ENCODE measurements at regions of chr9 and their contacts with region 1.

Region 1: DNA sequence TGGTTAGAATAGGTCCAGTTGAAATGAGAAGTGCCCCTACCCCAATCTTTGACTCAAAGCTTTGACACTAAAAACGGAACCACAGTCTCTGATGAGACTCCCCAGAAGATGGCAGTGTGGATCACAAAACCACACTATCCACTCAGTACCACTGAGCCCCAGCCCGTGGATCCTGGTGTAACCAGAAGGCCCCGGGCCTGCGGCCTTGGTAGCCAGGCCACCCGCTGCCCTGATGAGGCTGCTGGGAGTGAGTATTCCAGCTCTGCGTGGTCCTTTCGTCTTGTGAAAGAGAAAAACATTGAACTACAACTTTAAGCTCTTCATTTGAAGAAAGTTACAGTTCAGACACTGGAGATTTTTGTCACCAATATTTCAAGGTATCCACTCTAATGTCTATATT is 42.2 kb upstream of the FBP1 start:
- DNase-seq: peak; percentile 87
- H3K4me3 ChIP-seq: no peak overlapping the region; a peak in 1 of 4 replicates
- H3K27ac ChIP-seq: peak overlapping the region in 1 of 2 experiments; percentile 83; a peak in 2 of 4 replicates
- H3K4me1 ChIP-seq: peaks cover 0 to 35% of the 10 kb centered on the region in 2 experiments; a peak in 1 of 4 replicates
- H3K27me3 ChIP-seq: no peaks in the 10 kb centered on the region
- CTCF ChIP-seq: peak; percentile 81
- EP300 ChIP-seq: no peak
- RAD21 ChIP-seq: peak; percentile 94

Region 2: DNA sequence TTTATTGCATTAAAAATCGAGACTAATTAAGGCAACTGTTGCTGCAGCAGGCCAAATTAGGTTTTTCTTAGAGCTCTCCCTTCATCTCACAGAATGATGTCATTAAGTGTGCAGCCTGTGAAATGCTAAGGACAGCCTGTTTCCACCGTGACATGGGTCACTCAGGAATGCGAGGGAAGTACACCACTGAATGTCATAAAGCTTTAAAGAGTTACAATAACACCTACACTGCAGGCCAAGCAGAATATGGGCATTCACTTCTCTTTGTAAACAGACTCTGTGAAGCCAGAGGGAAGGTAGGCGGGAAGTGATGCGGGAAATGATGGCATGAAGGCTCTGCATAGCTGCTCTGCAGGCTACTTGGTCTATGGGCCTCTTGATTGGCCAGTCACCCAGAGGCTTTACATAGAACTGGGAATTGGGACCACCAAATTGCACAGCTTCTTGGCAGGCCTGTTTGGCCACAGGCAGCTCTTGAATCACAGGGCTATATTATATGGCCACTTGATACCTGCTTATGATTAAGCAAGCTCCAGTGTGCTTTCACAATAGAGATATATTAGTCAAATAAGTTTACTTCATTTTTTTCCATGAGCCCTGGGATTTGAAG is 16.6 kb after region 1 on chr9:
- CTCF ChIA-PET with region 1: interaction called, 41 read pairs
- POLR2A ChIA-PET with region 1: no interaction called
- DNase-seq: no peak
- H3K4me3 ChIP-seq: no peak overlapping the region
- H3K27ac ChIP-seq: peak overlapping the region in 1 of 2 experiments; percentile 48; a peak in 1 of 4 replicates
- H3K4me1 ChIP-seq: peaks cover 0 to 20% of the 10 kb centered on the region in 2 experiments; a peak in 1 of 4 replicates
- H3K27me3 ChIP-seq: no peaks in the 10 kb centered on the region
- CTCF ChIP-seq: no peak
- EP300 ChIP-seq: no peak
- RAD21 ChIP-seq: no peak

Region 3: DNA sequence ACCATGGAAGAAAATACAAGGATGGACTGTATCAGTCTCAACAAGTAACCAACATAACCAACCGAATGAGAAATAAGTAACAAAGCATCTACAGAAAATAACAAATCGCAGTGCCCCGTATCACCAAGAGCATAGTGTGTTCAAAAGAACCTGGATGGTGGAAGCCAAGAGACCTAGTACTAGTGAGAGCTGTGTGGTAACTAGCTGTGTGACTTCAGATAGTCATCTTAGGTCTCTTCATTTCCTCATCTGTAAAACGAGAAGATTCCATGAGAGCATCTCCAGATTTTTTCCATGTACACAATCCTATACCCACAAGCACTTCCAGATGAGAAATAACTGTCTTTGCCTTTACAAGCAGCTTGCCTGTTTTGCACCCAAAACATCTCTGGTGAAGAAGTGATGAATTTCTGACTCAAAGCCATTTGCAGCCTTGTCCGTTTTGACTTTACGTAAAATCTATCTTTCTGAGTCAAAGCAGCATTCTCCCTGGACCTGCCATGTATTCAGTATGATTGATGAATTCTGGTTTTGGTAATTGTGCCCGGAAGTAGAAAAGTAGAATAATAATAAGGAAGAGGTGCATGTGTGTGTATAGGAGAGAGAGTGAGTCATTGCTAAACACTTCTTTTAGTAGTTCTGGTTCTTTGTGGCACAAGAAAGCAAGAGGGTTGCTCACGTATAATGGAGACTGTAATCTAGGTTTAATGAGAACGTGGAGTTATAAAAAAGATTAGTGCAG is 86.0 kb after region 1 on chr9:
- CTCF ChIA-PET with region 1: interaction called, 12 read pairs
- POLR2A ChIA-PET with region 1: no interaction called
- DNase-seq: no peak
- H3K4me3 ChIP-seq: no peak overlapping the region
- H3K27ac ChIP-seq: peak overlapping the region; percentile 48 to 75
- H3K4me1 ChIP-seq: peaks cover 0 to 4% of the 10 kb centered on the region in 2 experiments; a peak in 2 of 4 replicates
- H3K27me3 ChIP-seq: no peaks in the 10 kb centered on the region
- CTCF ChIP-seq: no peak
- EP300 ChIP-seq: peak in 1 of 2 experiments; percentile 49; a peak in 1 of 4 replicates
- RAD21 ChIP-seq: no peak

Region 4: DNA sequence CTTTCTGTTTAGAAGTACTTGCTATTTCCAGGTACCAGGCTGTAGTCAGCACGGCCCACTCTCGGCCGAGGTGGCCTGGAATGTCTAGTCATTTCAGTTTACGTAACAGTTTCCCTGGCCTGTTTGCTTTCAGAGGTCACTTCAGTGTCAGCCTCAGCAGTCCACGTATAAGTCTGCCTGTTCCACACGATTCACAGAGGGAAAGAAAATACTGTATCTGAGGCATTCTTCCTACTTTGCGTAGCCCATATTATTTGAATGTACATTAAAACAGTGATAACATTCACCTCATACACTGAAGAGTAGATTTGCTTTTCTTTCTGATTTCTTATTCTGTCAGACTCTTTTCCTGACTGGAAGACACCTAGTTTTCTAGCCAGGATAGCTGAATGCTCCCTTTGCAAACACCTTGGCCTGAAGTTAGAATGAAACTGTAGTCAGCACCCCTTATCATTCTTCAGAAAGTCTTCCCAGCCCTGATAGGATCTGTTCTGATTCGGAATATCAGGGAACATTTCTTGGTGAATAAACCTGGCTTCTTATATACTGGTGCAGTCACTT is 185.9 kb after region 1 on chr9:
- CTCF ChIA-PET with region 1: interaction called, 22 read pairs
- POLR2A ChIA-PET with region 1: no interaction called
- DNase-seq: peak; percentile 17
- H3K4me3 ChIP-seq: peak overlapping the region in 1 of 2 experiments; percentile 7; a peak in 1 of 4 replicates
- H3K27ac ChIP-seq: peak overlapping the region; percentile 97 to 100
- H3K4me1 ChIP-seq: peaks cover 63 to 75% of the 10 kb centered on the region in 2 experiments
- H3K27me3 ChIP-seq: no peaks in the 10 kb centered on the region
- CTCF ChIP-seq: no peak
- EP300 ChIP-seq: no peak
- RAD21 ChIP-seq: no peak; the same call in 1 of the 2 replicates

Region 5: DNA sequence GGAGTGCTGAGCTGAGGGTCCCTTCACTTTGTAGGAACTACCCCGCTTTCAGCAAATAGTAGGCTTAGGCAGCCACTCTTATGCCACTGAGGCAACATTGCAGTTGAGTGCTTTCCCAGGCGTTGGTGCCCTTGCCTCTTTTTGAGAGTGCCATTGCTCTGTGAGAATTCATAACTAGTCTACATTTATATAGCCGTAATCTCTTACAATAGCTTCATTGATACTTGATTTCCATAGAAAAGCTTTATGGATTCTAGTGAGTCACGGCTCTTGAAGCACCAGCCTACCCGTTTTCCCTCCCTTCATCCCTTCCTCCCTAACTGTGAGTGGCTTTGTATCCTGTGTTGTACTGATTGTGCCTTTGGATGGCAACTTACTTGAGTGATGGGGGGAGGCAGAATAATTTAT is 328.9 kb after region 1 on chr9:
- CTCF ChIA-PET with region 1: interaction called, 10 read pairs
- POLR2A ChIA-PET with region 1: interaction called, 8 read pairs
- DNase-seq: no peak
- H3K4me3 ChIP-seq: no peak overlapping the region
- H3K27ac ChIP-seq: peak overlapping the region; percentile 78 to 87; a peak in 3 of 4 replicates
- H3K4me1 ChIP-seq: peaks cover 11 to 29% of the 10 kb centered on the region in 2 experiments; a peak in 3 of 4 replicates
- H3K27me3 ChIP-seq: no peaks in the 10 kb centered on the region
- CTCF ChIP-seq: no peak
- EP300 ChIP-seq: no peak
- RAD21 ChIP-seq: no peak

Region 6: DNA sequence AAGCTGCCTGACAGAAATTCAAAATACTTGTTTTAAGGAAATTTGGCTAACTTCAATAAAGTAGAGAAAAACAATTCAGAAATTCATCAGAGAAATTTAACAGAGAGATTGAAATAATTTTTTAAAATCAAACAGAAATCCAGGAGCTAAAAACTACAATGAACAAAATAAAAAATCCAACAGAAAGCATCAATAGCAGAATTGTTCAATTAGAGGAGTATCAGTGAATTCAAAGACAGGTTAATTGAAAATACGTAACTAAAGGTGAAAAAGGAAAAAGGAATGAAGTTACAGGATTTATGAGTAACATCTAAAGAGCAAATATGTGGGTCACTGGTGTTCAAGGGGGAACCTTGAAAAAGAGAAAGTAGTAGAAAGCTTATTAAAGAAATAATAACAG is 599.2 kb after region 1 on chr9:
- CTCF ChIA-PET with region 1: no interaction called
- POLR2A ChIA-PET with region 1: no interaction called
- DNase-seq: no peak
- H3K4me3 ChIP-seq: no peak overlapping the region
- H3K27ac ChIP-seq: no peak overlapping the region
- H3K4me1 ChIP-seq: no peaks in the 10 kb centered on the region
- H3K27me3 ChIP-seq: no peaks in the 10 kb centered on the region
- CTCF ChIP-seq: no peak
- EP300 ChIP-seq: no peak
- RAD21 ChIP-seq: no peak